Mammary epithelial cell (primary cell): ENCODE measurements at regions of chr3 and their contacts with region 1.

Region 1: GRCh38 chr3:63193629-63194028 is 84.5 kb upstream of the SYNPR start:
- DNase-seq: peak; percentile 9
- H3K4me3 ChIP-seq: no peak overlapping the region
- H3K27ac ChIP-seq: no peak overlapping the region
- H3K4me1 ChIP-seq: no peaks in the 10 kb centered on the region
- H3K27me3 ChIP-seq: peaks cover 3% of the 10 kb centered on the region
- CTCF ChIP-seq: peak; percentile 34 to 65

Region 2: DNA sequence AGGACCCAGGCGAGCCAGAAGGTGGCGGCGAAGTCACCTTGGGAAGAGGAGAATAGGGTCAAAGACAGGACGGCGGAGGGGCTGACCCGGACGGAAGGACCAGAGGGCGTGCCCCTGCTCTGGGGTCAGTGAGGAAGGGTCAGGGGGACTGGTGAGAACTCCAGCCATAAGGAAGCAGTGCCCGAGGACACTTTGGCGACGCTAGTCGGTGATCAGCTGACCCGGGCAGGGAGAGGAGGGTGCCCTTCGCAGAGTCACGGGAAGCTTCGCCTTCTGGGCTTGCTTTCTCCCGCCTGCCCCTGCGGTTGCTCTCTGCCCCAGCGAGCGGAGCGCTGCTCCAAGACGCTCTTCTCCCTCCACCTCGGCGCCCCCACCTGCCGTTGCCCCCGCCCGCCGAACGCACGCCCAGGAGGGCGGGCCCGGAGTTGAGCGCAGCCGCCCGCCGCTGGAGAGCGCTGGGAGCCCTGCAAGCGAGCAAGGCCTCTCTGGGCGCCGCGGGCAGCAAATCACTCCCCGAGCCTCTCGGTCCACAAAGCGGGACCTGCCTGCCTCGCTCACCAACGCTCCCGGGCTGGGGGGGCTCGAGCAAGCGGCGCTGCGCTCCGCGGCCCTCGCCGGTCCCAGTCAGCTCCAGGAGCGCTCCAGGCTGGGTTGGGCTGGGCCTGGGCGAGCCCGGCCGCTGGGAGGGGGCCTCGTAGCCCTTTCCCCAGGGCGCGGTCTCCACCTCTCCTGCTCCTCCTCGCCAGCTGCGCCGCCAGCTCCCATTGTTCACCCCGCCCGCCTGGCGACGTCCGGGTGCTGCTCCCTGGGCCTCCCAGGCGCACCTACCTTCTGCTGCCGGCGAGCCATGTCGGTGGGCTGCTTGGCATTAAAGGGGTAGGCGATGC is 319.6 kb before region 1 on chr3:
- CTCF ChIA-PET with region 1: interaction called, 28 read pairs
- dilution Hi-C with region 1: no loop called
- in situ Hi-C with region 1: no loop called
- intact Hi-C with region 1: no loop called
- DNase-seq: no peak
- H3K4me3 ChIP-seq: peak overlapping the region; percentile 6 to 35 (median 30)
- H3K27ac ChIP-seq: no peak overlapping the region
- H3K4me1 ChIP-seq: peaks cover 23% of the 10 kb centered on the region
- H3K27me3 ChIP-seq: peaks cover 29% of the 10 kb centered on the region
- CTCF ChIP-seq: peak in 1 of 2 donors; percentile 3